AG04450 (cell line): ENCODE measurements at regions of chr13 and their contacts with region 1.

Region 1: DNA sequence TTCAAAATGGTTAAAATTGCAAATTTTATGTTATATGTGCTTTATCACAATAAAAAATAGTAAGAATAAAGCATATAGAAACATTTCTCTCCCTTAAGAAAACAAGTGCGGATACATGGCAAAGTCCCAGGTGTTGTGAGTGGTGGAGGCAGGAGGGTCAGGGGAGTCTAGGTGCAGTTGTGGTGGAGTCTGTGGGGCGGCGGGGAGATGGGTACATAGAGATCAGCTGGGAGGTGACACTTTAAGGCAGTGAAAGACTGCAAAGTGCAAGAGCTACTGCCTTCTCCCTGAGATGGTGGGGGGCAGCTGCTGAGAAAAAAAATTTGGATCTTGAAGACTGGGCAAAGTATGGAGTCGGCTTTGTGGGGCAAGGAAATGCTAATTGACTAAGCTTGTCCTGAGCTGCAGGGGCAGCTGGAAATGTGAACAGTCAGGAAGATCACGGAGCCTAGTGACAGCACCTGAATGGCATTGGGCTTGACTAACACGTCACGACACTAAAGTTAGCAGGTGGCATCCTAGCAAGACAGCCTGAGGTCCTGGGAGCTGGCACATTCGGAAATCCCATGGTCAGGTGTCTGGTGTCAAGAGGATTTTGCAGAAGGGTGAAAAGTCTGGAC is 72.9 kb upstream of the IRS2 start:
- DNase-seq: no peak
- H3K4me3 ChIP-seq: no peak overlapping the region
- H3K27ac ChIP-seq: no peak overlapping the region
- H3K27me3 ChIP-seq: no peaks in the 10 kb centered on the region
- CTCF ChIP-seq: no peak

Region 2: GRCh38 chr13:110023729-110024644 is 164.7 kb after region 1 on chr13:
- CTCF ChIA-PET with region 1: no interaction called
- POLR2A ChIA-PET with region 1: interaction called, 12 read pairs
- DNase-seq: no peak
- H3K4me3 ChIP-seq: no peak overlapping the region
- H3K27ac ChIP-seq: peak overlapping the region; percentile 72
- H3K27me3 ChIP-seq: no peaks in the 10 kb centered on the region
- CTCF ChIP-seq: no peak